Lower leg skin (tissue), 4 donors: ENCODE measurements at regions of chr11 and their contacts with region 1.

Region 1: DNA sequence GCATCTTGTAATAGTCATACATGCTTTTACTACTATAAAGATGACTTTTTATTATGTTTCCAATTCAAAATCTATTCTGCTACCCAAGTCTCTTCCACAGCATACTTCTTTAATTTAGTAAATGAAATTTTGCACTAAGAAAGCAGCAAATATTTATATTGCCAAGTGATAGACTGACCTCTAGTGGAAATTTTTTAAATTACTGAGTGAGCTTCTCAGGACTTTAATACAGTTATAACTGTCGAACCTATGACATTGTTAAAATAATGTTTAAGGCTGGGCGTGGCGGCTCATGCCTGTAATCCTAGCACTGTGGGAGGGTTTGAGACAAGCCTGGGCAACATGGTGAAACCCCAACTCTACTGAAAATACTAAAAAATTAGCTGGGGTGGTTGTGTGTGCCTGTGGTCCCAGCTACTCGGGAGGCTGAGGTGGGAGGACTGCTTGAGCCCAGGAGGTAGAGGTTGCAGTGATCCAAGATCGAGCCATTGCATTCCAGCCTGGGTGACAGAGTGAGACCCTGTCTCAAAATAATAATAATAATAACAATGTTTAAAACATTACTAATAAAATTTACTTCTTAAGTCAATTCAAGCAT is 27.3 kb downstream of the STK33 start:
- DNase-seq: no peak
- H3K4me3 ChIP-seq: no peak overlapping the region
- CTCF ChIP-seq: no peak
- POLR2A ChIP-seq: no peak

Region 2: DNA sequence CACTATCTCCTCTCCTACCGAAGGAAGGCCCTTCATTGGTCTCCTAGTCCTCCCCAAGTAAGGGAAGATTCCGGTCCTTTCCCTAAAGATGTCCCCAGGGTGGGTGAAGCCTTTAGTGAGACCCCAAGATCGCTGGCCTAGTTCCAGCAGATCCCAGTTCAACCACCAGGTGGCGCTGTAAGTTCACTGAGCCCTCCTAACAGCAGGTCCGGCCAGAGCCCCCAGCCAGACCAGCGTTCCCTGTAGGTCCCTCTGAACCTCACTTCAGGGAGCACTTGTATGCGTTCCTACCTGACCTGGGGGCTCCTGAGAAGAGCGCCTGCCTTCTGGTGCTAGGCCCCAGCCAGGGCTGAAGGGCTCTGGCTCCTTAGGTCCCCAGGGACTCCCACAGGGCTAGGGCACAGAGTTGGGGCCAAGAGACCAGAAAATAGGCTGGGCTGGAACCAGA is 341.1 kb before region 1 on chr11:
- intact Hi-C with region 1: loop called (anchors 10 kb)
- DNase-seq: peak; percentile 63 to 95
- H3K4me3 ChIP-seq: no peak overlapping the region
- CTCF ChIP-seq: peak in 1 of 3 donors; percentile 63
- POLR2A ChIP-seq: no peak

Region 3: DNA sequence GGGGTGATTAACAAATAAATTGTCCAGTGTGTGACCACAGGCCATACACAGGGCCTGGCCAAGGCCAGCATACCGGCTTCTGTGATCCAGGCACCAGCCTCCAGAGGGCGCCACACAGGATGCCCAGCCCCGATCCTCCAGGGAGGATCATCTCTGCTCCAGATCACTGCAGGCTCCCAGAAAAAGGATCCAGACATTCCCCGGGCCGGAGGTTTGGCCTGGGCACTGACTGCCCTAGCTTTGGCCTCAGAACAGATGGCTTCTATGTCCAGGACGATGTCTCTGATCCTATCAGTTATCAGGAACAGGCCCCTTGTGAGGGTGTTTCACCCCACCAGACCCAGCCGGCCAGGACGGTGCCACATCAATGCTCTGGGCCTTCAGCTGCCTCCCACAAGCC is 228.6 kb before region 1 on chr11:
- intact Hi-C with region 1: loop called (anchors 10 kb)
- DNase-seq: no peak
- H3K4me3 ChIP-seq: no peak overlapping the region
- CTCF ChIP-seq: no peak
- POLR2A ChIP-seq: no peak

Region 4: DNA sequence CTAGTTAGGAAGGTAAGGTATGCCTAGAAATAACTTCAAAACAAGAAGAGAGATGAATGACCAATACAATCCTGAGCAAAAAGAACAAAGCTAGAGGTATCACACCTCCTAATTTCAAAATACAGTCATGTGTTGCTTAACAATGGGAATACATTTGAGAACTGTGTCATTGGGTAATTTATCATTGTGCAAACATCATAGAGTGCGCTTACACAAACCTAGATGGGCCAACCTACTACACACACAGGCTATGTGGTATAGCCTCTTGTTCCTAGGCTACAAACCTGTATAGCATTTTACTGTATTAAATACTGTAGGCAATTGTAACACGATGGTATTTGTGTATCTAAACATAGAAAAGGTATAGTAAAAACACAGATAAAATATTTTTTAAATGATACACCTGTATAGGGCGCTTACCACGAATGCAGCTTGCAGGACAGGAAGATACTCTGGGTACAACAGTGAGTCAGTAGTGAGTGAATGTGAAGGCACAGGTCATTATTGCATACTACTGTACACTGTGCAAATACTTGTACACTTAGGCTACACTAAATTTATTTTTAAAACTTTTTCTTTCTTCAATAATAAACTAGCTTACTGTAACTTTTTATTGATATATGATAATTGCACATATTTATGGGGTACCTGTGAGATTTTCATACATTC is 20.9 kb before region 1 on chr11:
- intact Hi-C with region 1: loop called (anchors 1 kb)
- DNase-seq: no peak
- H3K4me3 ChIP-seq: no peak overlapping the region
- CTCF ChIP-seq: no peak
- POLR2A ChIP-seq: no peak

Region 5: GRCh38 chr11:9380773-9381172 is 814.1 kb after region 1 on chr11:
- intact Hi-C with region 1: no loop called
- DNase-seq: no peak
- H3K4me3 ChIP-seq: no peak overlapping the region
- CTCF ChIP-seq: no peak
- POLR2A ChIP-seq: no peak